ENCODE measurements at regions of chr21 and their contacts with region 1.

Region 1: GRCh38 chr21:36319765-36320420 is at the start of gene MORC3:
- DNase-seq: peak; percentile 96 to 99 (median 98)
- ATAC-seq: peak; percentile 87
- H3K4me3 ChIP-seq: peak within 1 kb of the TSS; percentile 63 to 74
- H3K4me3 Mint-ChIP-seq: peak within 1 kb of the TSS; percentile 94
- H3K27ac ChIP-seq: peak within 1 kb of the TSS; percentile 84 to 85
- H3K27ac Mint-ChIP-seq: peak within 1 kb of the TSS; percentile 98
- H3K4me1 ChIP-seq: peaks cover 18% of the 10 kb centered on the region
- H3K4me1 Mint-ChIP-seq: peaks cover 36% of the 10 kb centered on the region
- H3K27me3 ChIP-seq: no peaks in the 10 kb centered on the region
- H3K27me3 Mint-ChIP-seq: no peaks in the 10 kb centered on the region
- CTCF ChIP-seq: no peak
- total RNA-seq, gene MORC3: 48.7 to 52.1 TPM

Region 2: DNA sequence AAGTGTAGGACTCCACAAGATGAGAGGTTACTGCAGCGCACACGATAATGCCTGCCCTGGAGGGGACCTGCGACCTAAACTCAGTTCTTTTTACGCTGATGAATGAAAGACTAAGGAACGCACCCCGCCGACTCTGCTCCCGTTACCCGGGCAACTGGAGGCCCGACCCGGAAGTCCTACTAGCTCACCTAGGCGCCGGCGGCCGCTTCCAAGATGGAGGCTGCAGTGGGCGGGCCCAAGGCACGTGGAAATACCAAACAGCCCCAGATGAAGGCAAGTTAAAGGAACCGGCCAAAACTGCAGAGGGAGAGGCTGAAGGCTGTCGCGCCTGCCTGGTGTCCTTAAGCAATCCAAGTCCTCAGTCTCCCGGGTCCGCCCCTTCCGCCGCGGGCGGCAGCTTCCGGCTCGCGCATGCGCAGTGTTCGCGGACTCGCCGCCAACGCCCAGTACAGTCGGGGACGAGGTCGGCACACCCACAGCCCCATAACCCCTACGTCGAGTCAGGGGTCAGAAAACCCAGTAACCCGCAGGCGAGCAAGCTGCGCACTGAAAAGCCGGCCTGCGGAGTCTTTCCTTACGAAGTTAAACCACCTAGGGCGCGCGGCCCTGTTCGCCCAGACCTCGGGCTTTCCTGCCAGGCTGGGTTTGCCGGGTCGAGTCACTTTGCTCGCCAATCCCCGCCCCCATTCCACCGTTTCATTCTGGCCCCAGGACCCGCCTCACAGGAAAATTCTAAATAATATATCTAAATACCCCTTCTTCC is 259.6 kb before region 1 on chr21 and contains the start of gene SETD4:
- CTCF ChIA-PET with region 1: no interaction called
- POLR2A ChIA-PET with region 1: interaction called, 6 read pairs
- intact Hi-C with region 1: loop called (anchors 1 kb)
- DNase-seq: peak; percentile 80 to 97 (median 92)
- ATAC-seq: peak; percentile 87
- H3K4me3 ChIP-seq: peak within 1 kb of the TSS; percentile 88 to 99
- H3K4me3 Mint-ChIP-seq: peak within 1 kb of the TSS; percentile 96
- H3K27ac ChIP-seq: peak within 1 kb of the TSS; percentile 69 to 90
- H3K27ac Mint-ChIP-seq: peak within 1 kb of the TSS; percentile 98
- H3K4me1 ChIP-seq: peaks cover 4% of the 10 kb centered on the region
- H3K4me1 Mint-ChIP-seq: peaks cover 27% of the 10 kb centered on the region
- H3K27me3 ChIP-seq: no peaks in the 10 kb centered on the region
- H3K27me3 Mint-ChIP-seq: no peaks in the 10 kb centered on the region
- CTCF ChIP-seq: no peak
- total RNA-seq, gene SETD4: 13.9 to 15.4 TPM

Region 3: GRCh38 chr21:36169436-36170128 is 150.3 kb before region 1 on chr21:
- CTCF ChIA-PET with region 1: interaction called, 8 read pairs
- POLR2A ChIA-PET with region 1: interaction called, 9 read pairs
- intact Hi-C with region 1: loop called in 1 of 2 experiments (anchors 5 kb)
- DNase-seq: no peak
- ATAC-seq: no peak
- H3K4me3 ChIP-seq: no peak overlapping the region
- H3K4me3 Mint-ChIP-seq: no peak overlapping the region
- H3K27ac ChIP-seq: no peak overlapping the region
- H3K27ac Mint-ChIP-seq: no peak overlapping the region
- H3K4me1 ChIP-seq: peaks cover 13% of the 10 kb centered on the region
- H3K4me1 Mint-ChIP-seq: peaks cover 7% of the 10 kb centered on the region
- H3K27me3 ChIP-seq: no peaks in the 10 kb centered on the region
- H3K27me3 Mint-ChIP-seq: no peaks in the 10 kb centered on the region
- CTCF ChIP-seq: no peak

Region 4: DNA sequence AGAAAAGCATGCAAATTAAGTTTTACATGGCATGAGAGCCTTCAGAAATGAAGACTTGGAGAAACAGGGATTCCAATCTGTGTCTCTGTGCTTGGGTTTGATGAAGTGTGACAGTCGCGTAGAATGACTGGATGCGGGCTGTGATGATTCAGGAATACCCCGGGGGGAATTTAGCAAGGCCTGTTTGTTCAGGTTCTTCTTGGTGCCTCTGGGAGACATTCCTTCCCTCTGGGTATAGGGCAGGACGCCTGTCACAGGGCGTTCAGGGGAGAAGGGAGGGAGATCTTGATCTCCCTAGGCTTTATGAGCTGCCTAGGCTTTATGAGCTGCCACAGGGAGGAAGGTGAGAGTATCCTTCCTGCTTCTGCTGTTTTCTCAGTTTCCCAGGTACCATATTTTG is 126.7 kb before region 1 on chr21:
- CTCF ChIA-PET with region 1: no interaction called
- POLR2A ChIA-PET with region 1: no interaction called
- intact Hi-C with region 1: no loop called
- DNase-seq: no peak
- ATAC-seq: no peak
- H3K4me3 ChIP-seq: no peak overlapping the region
- H3K4me3 Mint-ChIP-seq: no peak overlapping the region
- H3K27ac ChIP-seq: no peak overlapping the region
- H3K27ac Mint-ChIP-seq: no peak overlapping the region
- H3K4me1 ChIP-seq: no peaks in the 10 kb centered on the region
- H3K4me1 Mint-ChIP-seq: peaks cover 2% of the 10 kb centered on the region
- H3K27me3 ChIP-seq: no peaks in the 10 kb centered on the region
- H3K27me3 Mint-ChIP-seq: no peaks in the 10 kb centered on the region
- CTCF ChIP-seq: no peak

Region 5: DNA sequence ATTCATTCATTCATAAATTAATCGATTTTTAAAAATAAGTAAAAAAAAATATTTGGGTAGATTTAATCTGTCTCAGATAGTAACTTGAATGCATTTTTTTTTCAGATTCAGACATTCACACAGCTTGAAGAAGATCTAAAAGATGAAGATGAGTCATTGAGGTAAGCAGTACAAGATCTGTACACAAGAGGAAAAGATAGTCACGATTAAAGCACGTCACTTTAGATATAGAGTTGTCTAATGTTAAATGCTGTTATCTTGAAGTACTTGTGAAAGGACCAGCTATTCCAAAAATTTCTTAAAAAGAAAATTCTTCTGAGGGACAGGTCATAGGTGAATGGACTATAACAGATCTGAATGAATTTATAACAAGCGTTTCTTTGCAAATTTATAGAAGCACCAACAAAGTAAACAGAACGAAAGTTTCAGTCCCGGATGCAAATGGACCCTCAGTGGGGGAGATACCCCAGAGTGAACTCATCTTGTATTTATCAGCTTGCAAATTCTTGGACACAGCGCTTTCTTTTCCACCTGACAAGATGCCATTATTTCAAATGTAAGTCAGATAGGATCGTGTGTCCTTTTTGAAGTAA is 31.1 kb before region 1 on chr21:
- CTCF ChIA-PET with region 1: interaction called, 41 read pairs
- POLR2A ChIA-PET with region 1: interaction called, 55 read pairs
- intact Hi-C with region 1: loop called (anchors 1 to 2 kb)
- DNase-seq: peak in 2 of 9 experiments; percentile 29 to 68
- ATAC-seq: peak; percentile 81
- H3K4me3 ChIP-seq: no peak overlapping the region
- H3K4me3 Mint-ChIP-seq: peak overlapping the region; percentile 68
- H3K27ac ChIP-seq: peak overlapping the region; percentile 53 to 66
- H3K27ac Mint-ChIP-seq: peak overlapping the region; percentile 91
- H3K4me1 ChIP-seq: peaks cover 8% of the 10 kb centered on the region
- H3K4me1 Mint-ChIP-seq: peaks cover 18% of the 10 kb centered on the region
- H3K27me3 ChIP-seq: no peaks in the 10 kb centered on the region
- H3K27me3 Mint-ChIP-seq: no peaks in the 10 kb centered on the region
- CTCF ChIP-seq: no peak

Region 6: DNA sequence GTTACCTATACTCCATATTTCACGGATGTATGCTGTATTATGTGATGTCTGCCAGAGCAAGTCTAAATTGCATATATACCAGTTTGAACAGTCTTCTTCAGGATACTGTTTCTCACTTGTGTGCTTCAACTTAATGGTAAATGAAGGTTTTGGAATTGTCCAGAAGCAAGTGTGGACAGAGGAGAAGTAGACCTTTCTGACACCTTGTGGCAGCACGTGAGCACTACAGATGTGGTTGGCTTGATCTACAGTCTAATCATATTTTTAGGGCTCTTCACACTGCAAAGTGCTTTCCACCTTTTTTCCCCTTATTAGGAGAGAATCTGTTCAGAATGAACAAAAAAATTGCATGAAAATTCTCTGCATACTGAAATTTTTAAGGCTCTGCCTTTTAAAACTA is 11.0 kb after region 1 on chr21:
- CTCF ChIA-PET with region 1: interaction called, 8 read pairs
- POLR2A ChIA-PET with region 1: interaction called, 5 read pairs
- intact Hi-C with region 1: loop called in 1 of 2 experiments (anchors 1 kb)
- DNase-seq: peak in 7 of 9 experiments; percentile 16 to 75 (median 51)
- ATAC-seq: peak; percentile 92
- H3K4me3 ChIP-seq: no peak overlapping the region
- H3K4me3 Mint-ChIP-seq: no peak overlapping the region
- H3K27ac ChIP-seq: no peak overlapping the region
- H3K27ac Mint-ChIP-seq: peak overlapping the region; percentile 76
- H3K4me1 ChIP-seq: peaks cover 33% of the 10 kb centered on the region
- H3K4me1 Mint-ChIP-seq: peaks cover 51% of the 10 kb centered on the region
- H3K27me3 ChIP-seq: no peaks in the 10 kb centered on the region
- H3K27me3 Mint-ChIP-seq: no peaks in the 10 kb centered on the region
- CTCF ChIP-seq: peak; percentile 86